ENCODE measurements at regions of chr1 and their contacts with region 1.

Region 1: GRCh38 chr1:206808615-206809014 is 36.3 kb upstream of the IL10 start:
- DNase-seq: no peak
- ATAC-seq: peak; percentile 99
- H3K4me3 ChIP-seq: no peak overlapping the region
- H3K27ac ChIP-seq: no peak overlapping the region
- H3K4me1 ChIP-seq: peaks cover 11% of the 10 kb centered on the region
- H3K27me3 ChIP-seq: no peaks in the 10 kb centered on the region
- CTCF ChIP-seq: peak; percentile 69 to 92 (median 70)
- EP300 ChIP-seq: no peak
- POLR2A ChIP-seq: no peak
- RAD21 ChIP-seq: peak; percentile 99

Region 2: DNA sequence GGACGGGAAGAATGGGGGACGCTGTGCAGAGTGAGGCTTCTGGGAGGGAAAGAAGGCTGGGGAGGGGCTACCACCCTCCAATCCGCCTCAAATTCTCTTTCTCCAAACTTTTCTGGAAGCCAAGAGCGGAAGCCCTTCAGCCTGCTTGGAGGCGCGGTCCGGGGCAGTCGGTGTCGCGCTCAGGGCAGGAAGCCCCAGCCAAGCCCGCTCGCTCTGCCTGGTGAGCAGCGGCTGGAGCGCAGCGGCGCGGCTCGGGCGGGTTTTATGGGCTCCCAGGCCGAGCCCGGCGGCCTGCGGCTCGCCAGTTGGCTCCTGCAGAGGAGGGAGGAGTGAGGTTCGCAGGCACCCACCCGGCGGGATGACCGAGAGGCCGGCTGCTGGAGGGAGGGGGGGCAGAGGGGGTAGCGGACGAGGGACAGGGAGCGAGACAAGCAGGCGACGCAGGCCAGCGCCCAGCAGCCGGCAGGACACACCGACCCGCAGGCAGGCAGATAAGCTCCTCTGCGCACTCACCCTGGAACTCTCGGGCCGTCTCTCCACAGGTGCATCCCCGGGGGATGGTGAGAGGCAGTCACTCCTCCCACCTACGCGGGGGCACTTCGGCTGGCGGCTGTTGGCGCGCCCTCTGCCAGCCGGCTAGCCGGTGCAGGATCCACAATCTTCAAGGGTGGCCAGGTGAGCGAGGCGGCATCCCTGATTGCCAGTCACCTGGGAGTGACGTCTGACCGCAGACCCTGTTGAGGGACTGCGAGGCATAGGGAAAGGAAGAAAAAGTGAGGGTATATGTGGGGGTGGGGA is 691.3 kb before region 1 on chr1 and contains the start of gene AVPR1B:
- CTCF ChIA-PET with region 1: no interaction called
- POLR2A ChIA-PET with region 1: no interaction called
- RAD21 ChIA-PET with region 1: no interaction called
- SMC1A ChIA-PET with region 1: no interaction called
- in situ Hi-C with region 1: no loop called
- intact Hi-C with region 1: no loop called
- DNase-seq: no peak
- ATAC-seq: peak; percentile 50
- H3K4me3 ChIP-seq: no peak within 1 kb of the TSS
- H3K27ac ChIP-seq: no peak within 1 kb of the TSS
- H3K4me1 ChIP-seq: no peaks in the 10 kb centered on the region
- H3K27me3 ChIP-seq: peaks cover 5 to 10% of the 10 kb centered on the region in 2 experiments; a peak in 3 of 4 replicates
- CTCF ChIP-seq: no peak
- EP300 ChIP-seq: no peak
- POLR2A ChIP-seq: no peak
- RAD21 ChIP-seq: no peak
- polyA plus RNA-seq, gene AVPR1B: not detected

Region 3: DNA sequence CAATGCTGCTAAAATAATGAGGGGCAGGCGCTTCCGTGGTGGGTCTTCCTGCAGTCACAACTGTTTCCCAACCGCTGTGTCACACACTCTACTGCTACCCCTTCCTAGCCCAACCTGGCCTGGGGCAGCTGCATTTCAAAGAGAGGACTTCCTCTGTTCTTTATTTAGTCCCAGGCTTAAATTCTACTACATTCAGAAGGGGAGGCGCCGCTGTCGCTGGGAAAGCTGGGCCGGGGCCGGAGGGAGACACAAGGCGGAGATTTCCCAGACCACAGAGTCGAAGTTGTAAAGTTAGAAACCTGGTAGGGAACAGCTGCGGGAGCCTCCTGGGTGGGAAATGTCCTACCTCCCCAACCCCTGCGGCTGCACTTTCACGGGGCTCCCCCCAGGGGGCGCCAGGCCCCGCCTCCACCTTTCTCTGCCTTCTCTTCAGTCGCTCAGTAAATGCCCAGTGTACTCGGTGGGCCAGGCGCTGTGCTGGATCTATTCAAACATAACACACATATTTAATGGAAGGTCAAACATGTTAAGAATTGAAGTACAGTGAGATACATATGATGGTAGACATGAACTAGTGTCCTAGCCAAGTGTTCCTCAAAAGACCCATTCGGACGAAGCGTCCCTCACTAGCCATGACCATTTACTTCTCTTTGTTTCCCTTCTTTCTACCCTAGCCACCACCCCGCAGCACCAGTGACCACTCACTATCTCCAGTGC is 150.2 kb before region 1 on chr1:
- CTCF ChIA-PET with region 1: interaction called, 35 read pairs
- POLR2A ChIA-PET with region 1: interaction called, 3 read pairs
- RAD21 ChIA-PET with region 1: interaction called, 21 read pairs
- SMC1A ChIA-PET with region 1: interaction called, 52 read pairs
- in situ Hi-C with region 1: no loop called
- intact Hi-C with region 1: no loop called
- DNase-seq: no peak
- ATAC-seq: peak; percentile 93
- H3K4me3 ChIP-seq: no peak overlapping the region
- H3K27ac ChIP-seq: no peak overlapping the region
- H3K4me1 ChIP-seq: peaks cover 9% of the 10 kb centered on the region
- H3K27me3 ChIP-seq: no peaks in the 10 kb centered on the region
- CTCF ChIP-seq: peak; percentile 74 to 99 (median 98)
- EP300 ChIP-seq: no peak
- POLR2A ChIP-seq: no peak
- RAD21 ChIP-seq: peak; percentile 62

Region 4: DNA sequence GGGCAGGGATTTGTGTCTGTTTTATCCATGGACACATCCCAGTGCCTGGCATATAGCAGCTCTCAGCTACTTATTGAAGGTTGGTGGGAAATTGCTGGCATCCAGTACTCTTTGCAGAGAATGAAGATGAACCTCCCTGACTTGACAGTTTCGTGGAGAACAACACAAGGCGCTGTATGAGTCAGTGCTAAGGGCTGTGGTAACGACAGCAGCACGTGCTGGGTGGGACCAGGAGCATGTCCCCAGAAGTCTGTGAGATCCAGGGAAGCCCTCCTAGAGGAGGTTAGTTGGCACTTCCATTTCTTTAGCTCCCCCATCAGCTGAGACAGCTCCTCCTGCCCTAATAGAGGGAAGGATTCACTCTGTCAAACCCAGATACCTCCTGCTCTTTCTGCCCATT is 63.9 kb before region 1 on chr1:
- CTCF ChIA-PET with region 1: interaction called, 58 read pairs
- POLR2A ChIA-PET with region 1: interaction called, 10 read pairs
- RAD21 ChIA-PET with region 1: interaction called, 40 read pairs
- SMC1A ChIA-PET with region 1: interaction called, 117 read pairs
- in situ Hi-C with region 1: loop called (anchors 5 kb)
- intact Hi-C with region 1: loop called (anchors 1 kb)
- DNase-seq: no peak
- ATAC-seq: peak; percentile 22
- H3K4me3 ChIP-seq: no peak overlapping the region
- H3K27ac ChIP-seq: no peak overlapping the region
- H3K4me1 ChIP-seq: peaks cover 51% of the 10 kb centered on the region
- H3K27me3 ChIP-seq: no peaks in the 10 kb centered on the region
- CTCF ChIP-seq: no peak
- EP300 ChIP-seq: no peak
- POLR2A ChIP-seq: no peak
- RAD21 ChIP-seq: no peak

Region 5: GRCh38 chr1:206834711-206835110 is 26.1 kb after region 1 on chr1:
- CTCF ChIA-PET with region 1: interaction called, 21 read pairs
- POLR2A ChIA-PET with region 1: interaction called, 10 read pairs
- RAD21 ChIA-PET with region 1: interaction called, 6 read pairs
- SMC1A ChIA-PET with region 1: interaction called, 10 read pairs
- in situ Hi-C with region 1: no loop called
- intact Hi-C with region 1: no loop called
- DNase-seq: no peak
- ATAC-seq: peak; percentile 41; the same call in 2 of the 3 replicates
- H3K4me3 ChIP-seq: no peak overlapping the region
- H3K27ac ChIP-seq: no peak overlapping the region
- H3K4me1 ChIP-seq: peaks cover 32% of the 10 kb centered on the region
- H3K27me3 ChIP-seq: no peaks in the 10 kb centered on the region; a peak in 1 of 4 replicates
- CTCF ChIP-seq: no peak
- EP300 ChIP-seq: no peak
- POLR2A ChIP-seq: no peak
- RAD21 ChIP-seq: no peak

Region 6: GRCh38 chr1:206925106-206925736 is 116.6 kb after region 1 on chr1:
- CTCF ChIA-PET with region 1: interaction called, 131 read pairs
- POLR2A ChIA-PET with region 1: no interaction called
- RAD21 ChIA-PET with region 1: interaction called, 5 read pairs
- SMC1A ChIA-PET with region 1: interaction called, 85 read pairs
- in situ Hi-C with region 1: no loop called
- intact Hi-C with region 1: no loop called
- DNase-seq: peak; percentile 91
- ATAC-seq: peak; percentile 72
- H3K4me3 ChIP-seq: no peak overlapping the region; the same call in 1 of the 2 replicates
- H3K27ac ChIP-seq: peak overlapping the region; percentile 99
- H3K4me1 ChIP-seq: peaks cover 51% of the 10 kb centered on the region
- H3K27me3 ChIP-seq: no peaks in the 10 kb centered on the region
- CTCF ChIP-seq: peak in 1 of 3 experiments; percentile 29; a peak in 1 of 6 replicates
- EP300 ChIP-seq: no peak; a peak in 1 of 4 replicates
- POLR2A ChIP-seq: no peak
- RAD21 ChIP-seq: peak; percentile 56

Region 7: GRCh38 chr1:207393610-207394009 is 585.0 kb after region 1 on chr1:
- CTCF ChIA-PET with region 1: no interaction called
- POLR2A ChIA-PET with region 1: no interaction called
- RAD21 ChIA-PET with region 1: no interaction called
- SMC1A ChIA-PET with region 1: no interaction called
- in situ Hi-C with region 1: no loop called
- intact Hi-C with region 1: no loop called
- DNase-seq: no peak
- ATAC-seq: no peak
- H3K4me3 ChIP-seq: no peak overlapping the region
- H3K27ac ChIP-seq: no peak overlapping the region
- H3K4me1 ChIP-seq: no peaks in the 10 kb centered on the region
- H3K27me3 ChIP-seq: no peaks in the 10 kb centered on the region
- CTCF ChIP-seq: no peak
- EP300 ChIP-seq: no peak
- POLR2A ChIP-seq: no peak
- RAD21 ChIP-seq: no peak